Activated naive CD4-positive, alpha-beta T cell treated with anti-CD3 and anti-CD28 coated beads, Interleukin-2, amount 10 ng/mL, durations not matched to agents 7 days and 5 days (primary cell): ENCODE measurements at regions of chr5 and their contacts with region 1.

Region 1: GRCh38 chr5:132490486-132491367 is at the start of gene IRF1:
- DNase-seq: peak; percentile 98
- H3K4me3 Mint-ChIP-seq: peak within 1 kb of the TSS; percentile 99
- H3K27ac Mint-ChIP-seq: peak within 1 kb of the TSS; percentile 95
- H3K4me1 Mint-ChIP-seq: peaks cover 69% of the 10 kb centered on the region
- H3K27me3 Mint-ChIP-seq: no peaks in the 10 kb centered on the region

Region 2: DNA sequence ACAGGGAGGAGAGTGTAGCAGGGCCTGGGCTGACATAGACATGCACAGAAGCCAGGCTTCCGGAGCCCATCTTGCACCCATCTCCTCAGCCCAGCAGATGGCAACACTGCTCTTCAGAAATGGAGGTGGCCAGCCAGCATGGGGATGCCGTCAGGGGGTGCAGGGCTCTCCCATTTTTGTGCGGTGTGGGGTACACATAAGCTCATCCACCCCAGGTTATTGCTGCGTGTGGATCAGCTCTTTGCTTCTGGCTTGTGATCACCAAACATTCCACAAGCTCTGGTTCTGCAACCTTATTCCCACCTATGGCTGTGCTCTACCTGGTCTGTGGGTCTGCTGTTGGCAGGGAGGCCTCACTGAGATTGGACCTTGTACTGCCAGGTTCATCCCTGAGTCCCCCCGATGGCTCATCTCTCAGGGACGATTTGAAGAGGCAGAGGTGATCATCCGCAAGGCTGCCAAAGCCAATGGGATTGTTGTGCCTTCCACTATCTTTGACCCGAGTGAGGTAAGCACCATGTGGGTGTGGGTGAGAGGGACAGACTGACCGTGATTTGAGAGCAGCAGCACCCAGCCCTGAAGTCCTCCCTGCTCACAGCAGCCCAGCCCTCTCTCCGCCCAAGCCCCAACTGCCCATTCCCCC is 104.0 kb before region 1 on chr5:
- CTCF ChIA-PET with region 1: interaction called, 458 read pairs
- DNase-seq: peak; percentile 87
- H3K4me3 Mint-ChIP-seq: no peak overlapping the region
- H3K27ac Mint-ChIP-seq: peak overlapping the region; percentile 78
- H3K4me1 Mint-ChIP-seq: peaks cover 56% of the 10 kb centered on the region
- H3K27me3 Mint-ChIP-seq: no peaks in the 10 kb centered on the region

Region 3: GRCh38 chr5:132426525-132427138 is 64.1 kb before region 1 on chr5:
- CTCF ChIA-PET with region 1: interaction called, 87 read pairs
- DNase-seq: peak; percentile 81
- H3K4me3 Mint-ChIP-seq: peak overlapping the region; percentile 56
- H3K27ac Mint-ChIP-seq: peak overlapping the region; percentile 98
- H3K4me1 Mint-ChIP-seq: peaks cover 100% of the 10 kb centered on the region
- H3K27me3 Mint-ChIP-seq: no peaks in the 10 kb centered on the region

Region 4: GRCh38 chr5:132473019-132473531 is 17.7 kb before region 1 on chr5:
- CTCF ChIA-PET with region 1: interaction called, 29 read pairs
- DNase-seq: peak; percentile 94
- H3K4me3 Mint-ChIP-seq: peak overlapping the region; percentile 16
- H3K27ac Mint-ChIP-seq: peak overlapping the region; percentile 95
- H3K4me1 Mint-ChIP-seq: peaks cover 95% of the 10 kb centered on the region
- H3K27me3 Mint-ChIP-seq: no peaks in the 10 kb centered on the region

Region 5: DNA sequence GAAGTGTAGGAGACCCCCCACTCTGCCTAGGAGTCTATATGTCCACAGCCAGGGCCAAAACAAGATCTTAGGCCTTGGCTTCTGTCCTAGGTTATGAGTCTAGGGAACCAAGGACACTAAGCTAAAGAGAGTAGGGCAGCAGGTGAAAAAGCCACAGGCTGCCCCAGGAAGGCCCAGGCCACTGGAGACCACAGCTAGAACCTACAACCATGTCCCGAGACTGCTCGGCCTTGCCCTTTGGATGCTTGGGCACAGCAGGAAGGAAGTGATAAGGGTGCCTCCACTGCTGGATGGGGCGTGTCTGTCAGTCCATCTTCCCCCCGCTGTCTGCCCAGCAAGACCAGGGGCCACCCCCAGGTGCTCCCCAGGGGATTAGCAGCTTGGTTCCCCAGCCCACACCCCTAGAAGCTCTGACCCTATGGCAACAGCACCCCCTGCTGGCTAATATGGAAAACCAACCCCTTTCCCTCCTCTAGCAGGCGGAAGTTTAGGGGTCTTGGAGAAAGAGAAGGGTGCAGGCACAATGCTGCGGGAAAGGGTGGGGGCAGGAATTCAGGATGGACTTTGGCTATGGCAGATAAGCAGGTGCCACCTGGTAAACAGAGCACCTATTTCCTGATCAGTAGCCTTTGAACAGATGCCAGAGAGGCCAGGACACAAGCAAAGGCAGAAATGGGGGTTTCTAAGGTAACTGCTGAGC is 10.4 kb after region 1 on chr5:
- CTCF ChIA-PET with region 1: interaction called, 31 read pairs
- DNase-seq: peak; percentile 83
- H3K4me3 Mint-ChIP-seq: no peak overlapping the region
- H3K27ac Mint-ChIP-seq: peak overlapping the region; percentile 12
- H3K4me1 Mint-ChIP-seq: peaks cover 39% of the 10 kb centered on the region
- H3K27me3 Mint-ChIP-seq: peaks cover 24% of the 10 kb centered on the region